Psoas muscle (tissue), 8 donors: ENCODE measurements at regions of chr15 and their contacts with region 1.

Region 1: DNA sequence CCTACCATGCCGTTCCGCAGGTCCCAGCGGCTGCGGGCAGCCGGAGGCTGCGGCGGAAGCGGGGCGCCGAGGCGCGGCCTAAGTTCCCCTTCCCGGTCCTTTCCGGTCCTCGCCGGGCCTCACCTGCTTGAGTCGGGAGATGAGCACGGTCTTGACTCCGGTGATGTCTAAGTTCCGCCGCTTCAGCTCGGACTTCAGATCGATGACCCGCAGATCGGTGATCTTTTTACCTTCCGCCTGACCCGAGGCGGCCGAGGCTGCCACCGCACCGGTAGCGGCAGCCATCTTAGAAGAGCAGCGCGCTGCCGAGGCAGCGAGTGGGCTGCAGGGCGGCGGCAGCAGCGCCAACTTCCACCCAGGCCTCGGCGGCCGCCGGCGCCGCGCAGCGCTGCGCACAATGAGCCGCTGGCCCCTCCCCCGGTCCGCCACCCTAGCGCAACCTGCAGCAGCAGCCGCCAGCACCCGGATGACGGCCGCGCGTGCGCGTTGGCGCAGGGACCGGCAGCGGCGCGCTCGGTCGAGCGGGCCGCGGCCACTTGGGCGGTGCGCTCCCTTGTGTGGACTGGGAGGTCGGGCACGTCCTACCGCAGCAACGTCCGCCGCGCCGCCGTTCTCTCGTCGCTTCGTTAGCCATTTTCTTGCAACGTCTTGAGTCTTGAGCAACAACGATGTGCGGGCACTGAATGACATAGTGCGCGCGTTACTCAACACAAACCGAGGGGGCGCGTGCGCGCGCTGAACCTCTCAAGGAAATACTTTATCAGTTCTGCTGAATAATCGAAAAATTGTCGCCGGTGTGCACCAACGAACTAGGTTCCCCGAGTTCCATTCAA is at the start of gene SLTM:
- DNase-seq: peak; percentile 94 to 97
- ATAC-seq: peak; percentile 94 to 97 (median 96)
- H3K4me3 ChIP-seq: peak within 1 kb of the TSS; percentile 93
- H3K27ac ChIP-seq: peak within 1 kb of the TSS; percentile 99
- H3K4me1 ChIP-seq: peaks cover 23% of the 10 kb centered on the region
- H3K27me3 ChIP-seq: no peaks in the 10 kb centered on the region
- CTCF ChIP-seq: peak; percentile 20
- total RNA-seq, gene SLTM: 32.6 to 63.6 (median 40.5) TPM

Region 2: GRCh38 chr15:57772223-57772957 is 1161.1 kb before region 1 on chr15:
- intact Hi-C with region 1: no loop called
- DNase-seq: no peak
- ATAC-seq: no peak
- H3K4me3 ChIP-seq: no peak overlapping the region
- H3K27ac ChIP-seq: no peak overlapping the region
- H3K4me1 ChIP-seq: no peaks in the 10 kb centered on the region
- H3K27me3 ChIP-seq: no peaks in the 10 kb centered on the region
- CTCF ChIP-seq: no peak

Region 3: DNA sequence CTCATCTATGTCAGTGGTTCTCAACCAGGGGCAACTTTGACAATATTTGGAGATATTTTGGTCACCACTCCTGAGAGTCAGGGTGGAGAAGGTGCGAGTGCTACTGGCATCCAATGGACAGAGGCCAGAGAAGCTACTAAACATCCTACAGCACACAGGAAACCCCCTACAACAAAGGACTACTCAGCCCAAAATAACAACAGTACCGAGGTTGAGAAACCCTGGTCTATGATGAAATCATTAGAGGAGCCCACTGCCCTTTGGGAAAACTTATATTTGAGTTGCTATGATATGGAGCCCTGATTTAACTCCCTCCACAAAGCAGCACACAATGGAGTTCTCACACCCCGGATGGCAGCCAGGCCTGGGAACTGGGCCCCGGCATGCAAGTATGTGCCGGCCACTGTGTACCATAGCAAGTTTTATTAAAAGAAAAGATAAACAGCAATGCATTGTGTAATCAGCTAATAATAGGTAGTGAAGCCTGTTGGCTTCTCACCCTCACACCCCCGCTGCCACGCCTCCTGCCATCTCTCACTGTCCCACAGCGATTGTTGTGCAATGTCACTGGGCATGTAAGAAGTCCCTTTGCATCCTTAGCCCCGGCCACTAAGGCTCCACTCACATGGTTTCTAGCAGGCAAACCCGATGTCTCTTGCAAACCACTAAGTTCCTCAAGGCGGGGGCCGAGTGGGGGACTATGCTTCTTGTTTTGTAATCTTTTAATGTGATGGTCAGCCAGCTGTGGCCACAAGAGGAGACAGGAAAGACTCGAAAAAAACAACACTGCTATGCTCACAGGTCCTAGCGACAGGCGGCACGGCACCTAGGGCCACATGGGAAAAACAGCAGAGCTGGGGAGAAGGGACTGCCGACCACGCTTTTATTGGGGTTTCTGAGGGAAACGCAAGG is 685.4 kb before region 1 on chr15:
- intact Hi-C with region 1: loop called in 1 of 2 experiments (anchors 10 kb)
- DNase-seq: peak; percentile 81 to 93
- ATAC-seq: peak; percentile 93 to 96 (median 95)
- H3K4me3 ChIP-seq: no peak overlapping the region
- H3K27ac ChIP-seq: peak overlapping the region; percentile 81
- H3K4me1 ChIP-seq: peaks cover 26% of the 10 kb centered on the region
- H3K27me3 ChIP-seq: no peaks in the 10 kb centered on the region
- CTCF ChIP-seq: no peak